ENCODE measurements at regions of chr4 and their contacts with region 1.

Region 1: DNA sequence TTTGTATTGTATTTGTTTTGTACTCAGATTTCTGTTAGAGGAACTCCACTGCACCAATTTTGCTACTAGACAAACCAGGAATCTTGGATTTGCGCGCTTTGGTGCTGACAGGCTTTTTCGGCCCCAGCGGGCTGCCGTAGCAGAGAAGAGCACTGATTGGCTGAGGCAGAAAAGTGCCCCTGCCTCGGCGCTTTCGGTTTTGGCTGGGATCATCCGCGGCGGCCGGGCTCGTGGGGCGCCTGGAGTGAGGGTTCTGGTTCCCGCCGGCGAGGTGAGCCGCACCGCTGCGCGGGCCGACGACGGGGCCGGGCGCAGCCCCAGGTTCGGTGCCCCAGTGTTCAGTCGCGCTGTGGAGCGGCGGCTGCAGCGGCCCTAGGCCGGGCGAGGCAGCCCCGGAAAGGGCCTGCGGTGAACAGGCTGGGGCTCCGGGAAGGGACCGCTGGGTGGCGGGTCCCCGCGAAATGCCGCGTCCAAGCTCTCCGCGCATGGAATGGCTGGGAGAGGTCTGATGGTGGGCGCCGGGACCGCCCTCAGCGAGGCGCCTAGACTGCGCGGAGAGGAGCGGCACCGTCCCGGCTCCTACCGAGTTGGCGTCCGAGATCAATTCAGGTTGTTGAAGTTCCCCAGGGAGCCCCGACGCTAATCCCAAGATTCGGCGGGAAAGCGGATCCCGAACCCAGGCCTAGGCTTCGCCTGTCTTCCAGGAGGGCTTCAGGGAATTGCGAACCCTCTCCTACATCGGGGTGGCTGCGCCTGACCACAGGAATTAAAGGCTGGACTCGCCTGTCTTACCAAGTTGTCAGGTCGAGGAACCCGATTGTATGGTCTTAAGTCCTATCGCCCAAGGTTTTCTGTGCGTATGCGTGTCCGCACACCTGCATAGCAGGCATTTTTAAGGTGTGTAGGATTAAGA is at the start of gene LSM6:
- DNase-seq: peak; percentile 77
- H3K4me3 Mint-ChIP-seq: peak within 1 kb of the TSS; percentile 88
- H3K27ac Mint-ChIP-seq: peak within 1 kb of the TSS; percentile 81
- H3K4me1 Mint-ChIP-seq: peaks cover 40% of the 10 kb centered on the region
- H3K27me3 Mint-ChIP-seq: no peaks in the 10 kb centered on the region
- total RNA-seq, gene LSM6: 62.9 and 65.0 TPM in 2 replicates

Region 2: DNA sequence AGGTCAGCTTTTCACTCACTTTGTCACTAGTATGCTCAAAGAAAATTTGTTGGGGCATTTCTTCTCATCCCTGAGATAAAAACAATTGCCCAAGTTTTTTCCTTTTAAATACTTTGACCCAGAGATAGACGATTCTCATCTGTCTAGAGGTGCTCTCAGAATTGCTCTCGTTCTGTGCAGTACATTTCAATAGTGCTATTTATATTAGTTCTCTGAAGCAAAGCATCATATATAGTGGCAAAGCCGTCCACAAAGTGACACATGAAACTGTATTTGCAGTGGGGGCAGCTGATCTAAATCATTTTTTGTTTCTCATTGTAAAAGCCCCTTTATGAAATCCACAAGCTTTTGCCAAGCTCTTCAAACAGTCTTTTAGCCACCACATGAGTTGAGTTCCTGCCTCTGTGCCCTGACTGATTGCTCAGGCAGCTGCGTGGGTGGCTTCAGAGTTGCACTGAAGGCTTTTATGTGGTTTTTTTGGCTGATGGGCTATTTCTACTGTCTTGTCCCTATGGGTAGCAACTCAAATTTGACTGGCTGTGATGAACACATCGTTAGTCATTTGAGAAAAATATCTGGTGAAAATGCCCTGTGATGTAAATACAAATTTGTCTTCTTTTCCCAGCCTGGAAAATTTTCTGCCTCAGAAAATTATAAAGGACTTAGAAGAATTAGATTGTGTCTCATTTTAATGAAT is 876.3 kb before region 1 on chr4:
- intact Hi-C with region 1: loop called (anchors 5 kb)
- DNase-seq: peak; percentile 2
- H3K4me3 Mint-ChIP-seq: no peak overlapping the region
- H3K27ac Mint-ChIP-seq: no peak overlapping the region
- H3K4me1 Mint-ChIP-seq: peaks cover 17% of the 10 kb centered on the region
- H3K27me3 Mint-ChIP-seq: peaks cover 6% of the 10 kb centered on the region

Region 3: GRCh38 chr4:145956288-145956890 is 219.4 kb before region 1 on chr4:
- intact Hi-C with region 1: loop called (anchors 5 kb)
- DNase-seq: no peak
- H3K4me3 Mint-ChIP-seq: no peak overlapping the region
- H3K27ac Mint-ChIP-seq: no peak overlapping the region
- H3K4me1 Mint-ChIP-seq: peaks cover 5% of the 10 kb centered on the region
- H3K27me3 Mint-ChIP-seq: peaks cover 4% of the 10 kb centered on the region

Region 4: GRCh38 chr4:146095091-146095690 is 80.6 kb before region 1 on chr4:
- intact Hi-C with region 1: loop called (anchors 1 kb)
- DNase-seq: no peak
- H3K4me3 Mint-ChIP-seq: no peak overlapping the region
- H3K27ac Mint-ChIP-seq: no peak overlapping the region
- H3K4me1 Mint-ChIP-seq: peaks cover 4% of the 10 kb centered on the region
- H3K27me3 Mint-ChIP-seq: peaks cover 15% of the 10 kb centered on the region

Region 5: GRCh38 chr4:146159384-146160058 is 16.3 kb before region 1 on chr4:
- intact Hi-C with region 1: loop called (anchors 2 kb)
- DNase-seq: no peak
- H3K4me3 Mint-ChIP-seq: no peak overlapping the region
- H3K27ac Mint-ChIP-seq: peak overlapping the region; percentile 1
- H3K4me1 Mint-ChIP-seq: peaks cover 7% of the 10 kb centered on the region
- H3K27me3 Mint-ChIP-seq: peaks cover 3% of the 10 kb centered on the region